PC-9 (cell line): ENCODE measurements at regions of chr13 and their contacts with region 1.

Region 1: GRCh38 chr13:32427852-32428580 is at the start of gene N4BP2L1:
- DNase-seq: peak; percentile 41 to 45
- H3K4me3 ChIP-seq: peak within 1 kb of the TSS; percentile 87
- H3K27ac ChIP-seq: no peak within 1 kb of the TSS
- H3K4me1 ChIP-seq: peaks cover 15% of the 10 kb centered on the region; the same call in 1 of the 2 replicates
- H3K27me3 ChIP-seq: no peaks in the 10 kb centered on the region
- CTCF ChIP-seq: no peak
- total RNA-seq, gene N4BP2L1: 3.0 and 4.0 TPM in 2 replicates

Region 2: DNA sequence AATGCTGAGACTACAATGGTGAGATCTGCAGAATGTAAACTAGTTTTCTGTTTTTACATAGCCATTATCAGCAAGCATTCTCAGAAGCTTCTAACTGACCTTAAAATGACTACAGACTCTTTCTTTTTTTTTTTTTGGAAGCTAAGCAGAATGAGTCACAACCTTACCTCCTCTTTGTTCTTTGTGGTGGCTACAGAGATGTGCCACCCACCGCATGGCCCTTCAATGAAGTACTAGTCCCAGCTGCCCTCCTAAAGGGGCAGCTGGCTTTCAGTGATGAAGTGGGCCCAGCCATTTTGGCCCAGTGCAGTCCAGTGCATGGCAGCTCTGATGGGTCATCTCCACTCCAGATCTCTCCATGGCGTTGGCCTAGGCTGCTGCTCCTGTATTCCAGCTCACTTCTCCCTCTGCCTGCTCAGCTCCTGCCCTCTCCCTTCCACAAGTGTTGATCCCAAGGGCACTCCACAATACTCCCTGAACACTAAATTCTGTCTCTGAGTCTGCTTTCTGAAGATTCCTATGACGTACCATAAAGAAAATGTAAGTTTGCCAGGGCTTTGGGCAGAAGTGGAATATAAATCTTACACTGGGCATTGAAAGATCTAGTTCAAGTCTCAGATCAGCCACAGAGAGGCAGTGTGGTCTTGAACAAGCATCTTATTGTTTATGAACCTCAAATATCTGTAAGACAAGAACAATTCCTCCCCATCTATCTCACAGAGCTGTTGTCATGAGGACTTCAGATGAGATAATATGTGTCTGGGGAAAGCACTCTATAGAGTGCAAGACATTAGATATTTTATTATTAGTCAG is 603.1 kb before region 1 on chr13:
- CTCF ChIA-PET with region 1: no interaction called
- POLR2A ChIA-PET with region 1: no interaction called
- intact Hi-C with region 1: loop called (anchors 10 kb)
- DNase-seq: no peak
- H3K4me3 ChIP-seq: no peak overlapping the region
- H3K27ac ChIP-seq: no peak overlapping the region
- H3K4me1 ChIP-seq: no peaks in the 10 kb centered on the region
- H3K27me3 ChIP-seq: peaks cover 10% of the 10 kb centered on the region; the same call in 1 of the 2 replicates
- CTCF ChIP-seq: peak; percentile 28; the same call in 1 of the 2 replicates

Region 3: DNA sequence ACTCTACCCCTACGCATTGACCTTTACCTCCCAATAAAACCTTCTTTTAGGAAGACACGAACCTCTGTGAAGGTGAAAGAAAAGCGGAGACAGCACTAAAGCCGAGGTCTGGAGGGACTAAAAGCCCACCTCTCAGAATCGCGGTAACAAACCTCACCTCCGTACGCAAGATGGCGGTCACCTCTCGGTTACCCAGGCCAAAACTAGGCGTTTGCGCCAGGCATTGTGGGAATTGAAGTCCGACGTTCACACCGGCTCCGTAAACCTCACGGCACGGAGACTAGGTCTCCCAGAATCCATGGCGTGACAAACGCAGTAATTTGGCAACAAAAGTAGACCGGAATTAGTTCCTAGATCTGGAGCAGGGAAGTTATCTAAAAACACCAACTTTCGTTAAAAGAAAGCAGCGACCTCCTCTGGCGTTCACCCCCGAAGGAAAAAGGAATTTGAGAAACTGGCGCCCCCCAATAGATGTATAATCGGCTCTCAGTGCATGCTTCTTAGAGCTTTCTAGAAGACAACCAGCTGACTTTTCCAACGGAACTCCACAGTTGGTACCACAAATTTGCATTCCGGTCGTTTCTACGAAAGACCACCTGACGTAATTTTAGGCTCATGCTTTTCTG is 110.7 kb after region 1 on chr13 and contains the start of gene N4BP2L2:
- CTCF ChIA-PET with region 1: interaction called, 5 read pairs
- POLR2A ChIA-PET with region 1: no interaction called
- intact Hi-C with region 1: loop called (anchors 5 kb)
- DNase-seq: peak; percentile 80 to 91
- H3K4me3 ChIP-seq: peak within 1 kb of the TSS; percentile 70
- H3K27ac ChIP-seq: peak within 1 kb of the TSS; percentile 83
- H3K4me1 ChIP-seq: peaks cover 31% of the 10 kb centered on the region
- H3K27me3 ChIP-seq: no peaks in the 10 kb centered on the region
- CTCF ChIP-seq: peak; percentile 19; the same call in 1 of the 2 replicates
- total RNA-seq, gene N4BP2L2: 63.0 and 81.3 TPM in 2 replicates